MCF 10A (cell line): ENCODE measurements at regions of chr5 and their contacts with region 1.

Region 1: GRCh38 chr5:134145779-134146581 is 30.8 kb downstream of the SKP1 start:
- DNase-seq: peak; percentile 88
- H3K4me3 Mint-ChIP-seq: no peak overlapping the region
- H3K27ac Mint-ChIP-seq: no peak overlapping the region
- H3K4me1 Mint-ChIP-seq: peaks cover 13% of the 10 kb centered on the region
- H3K27me3 Mint-ChIP-seq: no peaks in the 10 kb centered on the region
- CTCF ChIP-seq: peak; percentile 98

Region 2: DNA sequence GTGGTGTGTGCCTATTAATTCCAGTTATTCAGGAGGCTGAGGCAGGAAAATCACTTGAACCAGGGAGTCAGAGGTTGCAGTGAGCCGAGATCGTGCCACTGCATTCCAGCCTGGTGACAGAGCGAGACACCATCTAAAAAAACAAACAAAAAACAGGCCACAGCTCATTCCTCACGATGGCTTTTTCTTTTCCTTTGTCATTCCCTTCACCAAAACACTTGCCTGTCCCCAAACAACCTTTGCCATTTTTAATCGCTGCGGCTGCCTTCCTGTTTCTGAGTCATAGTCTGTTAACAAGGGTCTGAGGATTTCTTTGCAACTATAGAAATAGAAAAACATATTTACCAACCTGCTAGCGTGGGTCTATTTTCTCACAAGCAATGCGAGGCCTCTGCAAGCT is 410.7 kb before region 1 on chr5:
- CTCF ChIA-PET with region 1: no interaction called
- POLR2A ChIA-PET with region 1: no interaction called
- intact Hi-C with region 1: no loop called
- DNase-seq: peak; percentile 29
- H3K4me3 Mint-ChIP-seq: no peak overlapping the region
- H3K27ac Mint-ChIP-seq: no peak overlapping the region
- H3K4me1 Mint-ChIP-seq: peaks cover 12% of the 10 kb centered on the region
- H3K27me3 Mint-ChIP-seq: no peaks in the 10 kb centered on the region
- CTCF ChIP-seq: no peak

Region 3: DNA sequence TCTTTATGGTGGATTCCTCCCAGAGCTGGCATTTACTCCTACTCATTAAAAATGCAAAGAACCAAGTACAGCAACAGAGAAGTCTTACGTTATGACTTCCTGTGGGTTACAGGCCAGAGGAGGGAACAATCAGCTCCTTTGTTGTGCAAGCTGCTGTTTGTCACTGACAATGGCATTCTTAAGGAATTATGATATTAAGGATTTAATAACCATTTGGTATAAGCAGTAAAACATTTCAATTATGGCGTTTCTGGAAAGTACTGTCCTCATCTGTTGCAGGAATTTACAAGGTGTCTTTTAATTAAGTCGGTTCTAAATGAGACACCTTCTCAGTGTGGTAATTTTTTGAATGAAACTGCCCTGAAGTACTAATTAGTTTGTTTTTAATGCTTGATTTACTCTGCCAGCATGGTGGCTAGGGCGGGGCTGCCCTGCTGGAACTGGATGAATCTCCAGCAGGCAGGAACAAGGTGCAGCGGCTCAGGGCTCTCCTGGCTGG is 92.1 kb before region 1 on chr5:
- CTCF ChIA-PET with region 1: interaction called, 867 read pairs
- POLR2A ChIA-PET with region 1: interaction called, 4 read pairs
- intact Hi-C with region 1: no loop called
- DNase-seq: peak; percentile 53
- H3K4me3 Mint-ChIP-seq: no peak overlapping the region
- H3K27ac Mint-ChIP-seq: peak overlapping the region; percentile 46
- H3K4me1 Mint-ChIP-seq: peaks cover 38% of the 10 kb centered on the region
- H3K27me3 Mint-ChIP-seq: no peaks in the 10 kb centered on the region
- CTCF ChIP-seq: no peak

Region 4: DNA sequence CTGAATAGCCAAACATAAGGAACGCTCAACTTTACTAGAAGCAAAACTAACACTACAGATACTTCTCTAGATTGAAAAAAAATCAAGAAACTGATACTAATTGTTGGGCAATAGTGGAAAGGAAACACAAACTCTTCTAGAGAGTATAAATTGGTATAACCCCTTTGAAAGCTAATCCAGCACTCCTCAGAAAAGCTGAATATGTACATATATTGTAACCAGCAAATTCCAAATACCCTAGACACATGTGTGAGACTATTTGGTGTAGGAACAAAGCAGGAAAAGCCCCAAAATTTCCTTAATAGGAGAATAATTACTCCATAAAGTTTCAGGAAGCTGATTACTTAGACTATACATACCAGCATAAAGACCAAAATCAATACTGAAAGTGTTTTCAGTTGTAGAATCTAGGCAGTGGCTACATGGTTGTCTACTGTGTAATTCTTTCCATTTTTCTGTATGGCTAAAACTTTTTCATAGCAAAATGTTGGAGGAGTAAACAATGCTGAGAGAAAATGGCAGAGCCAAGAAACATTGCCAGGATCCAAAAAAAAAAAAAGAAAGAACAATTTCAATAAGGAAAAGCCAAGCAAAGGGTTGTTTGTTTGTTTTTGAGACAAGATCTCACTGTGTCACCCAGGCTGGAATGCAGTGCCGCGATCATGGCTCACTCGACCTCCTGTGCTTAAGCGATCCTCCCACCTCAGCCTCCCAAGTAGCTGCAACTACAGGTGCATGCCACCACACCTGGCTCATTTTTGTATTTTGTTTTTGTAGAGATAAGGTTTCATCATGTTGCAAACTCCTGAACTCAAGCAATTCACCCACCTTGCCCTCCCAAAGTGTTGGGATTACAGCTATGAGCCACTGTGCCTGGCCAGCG is 15.8 kb after region 1 on chr5:
- CTCF ChIA-PET with region 1: interaction called, 21 read pairs
- POLR2A ChIA-PET with region 1: interaction called, 6 read pairs
- intact Hi-C with region 1: no loop called
- DNase-seq: no peak
- H3K4me3 Mint-ChIP-seq: no peak overlapping the region
- H3K27ac Mint-ChIP-seq: no peak overlapping the region
- H3K4me1 Mint-ChIP-seq: peaks cover 11% of the 10 kb centered on the region
- H3K27me3 Mint-ChIP-seq: no peaks in the 10 kb centered on the region
- CTCF ChIP-seq: no peak